BJ (cell line): ENCODE measurements at regions of chr22 and their contacts with region 1.

Region 1: GRCh38 chr22:32796865-32797573 is 4.5 kb upstream of the TIMP3 start:
- DNase-seq: no peak
- H3K4me3 ChIP-seq: no peak overlapping the region
- H3K27me3 ChIP-seq: no peaks in the 10 kb centered on the region
- CTCF ChIP-seq: peak; percentile 93

Region 2: DNA sequence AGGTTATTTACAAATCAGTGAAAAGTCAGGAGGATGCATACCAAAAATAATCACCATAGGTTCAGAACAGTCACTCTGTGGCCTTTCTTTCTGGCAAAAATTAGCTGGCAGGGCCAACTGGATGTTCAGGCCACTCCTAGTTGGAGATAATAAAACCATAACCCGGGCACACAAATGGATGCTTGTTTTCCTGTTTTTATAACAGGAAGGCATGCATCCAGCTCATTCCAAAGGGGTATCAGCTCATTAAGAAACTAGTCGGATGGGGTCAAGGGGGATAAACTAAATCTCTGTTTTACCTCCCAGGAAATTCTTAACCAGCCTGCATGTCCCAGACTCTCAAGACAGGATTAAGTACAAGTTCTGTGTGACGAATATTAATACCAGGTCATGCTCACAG is 241.4 kb before region 1 on chr22:
- CTCF ChIA-PET with region 1: interaction called, 11 read pairs
- POLR2A ChIA-PET with region 1: no interaction called
- DNase-seq: no peak
- H3K4me3 ChIP-seq: no peak overlapping the region
- H3K27me3 ChIP-seq: no peaks in the 10 kb centered on the region
- CTCF ChIP-seq: no peak

Region 3: DNA sequence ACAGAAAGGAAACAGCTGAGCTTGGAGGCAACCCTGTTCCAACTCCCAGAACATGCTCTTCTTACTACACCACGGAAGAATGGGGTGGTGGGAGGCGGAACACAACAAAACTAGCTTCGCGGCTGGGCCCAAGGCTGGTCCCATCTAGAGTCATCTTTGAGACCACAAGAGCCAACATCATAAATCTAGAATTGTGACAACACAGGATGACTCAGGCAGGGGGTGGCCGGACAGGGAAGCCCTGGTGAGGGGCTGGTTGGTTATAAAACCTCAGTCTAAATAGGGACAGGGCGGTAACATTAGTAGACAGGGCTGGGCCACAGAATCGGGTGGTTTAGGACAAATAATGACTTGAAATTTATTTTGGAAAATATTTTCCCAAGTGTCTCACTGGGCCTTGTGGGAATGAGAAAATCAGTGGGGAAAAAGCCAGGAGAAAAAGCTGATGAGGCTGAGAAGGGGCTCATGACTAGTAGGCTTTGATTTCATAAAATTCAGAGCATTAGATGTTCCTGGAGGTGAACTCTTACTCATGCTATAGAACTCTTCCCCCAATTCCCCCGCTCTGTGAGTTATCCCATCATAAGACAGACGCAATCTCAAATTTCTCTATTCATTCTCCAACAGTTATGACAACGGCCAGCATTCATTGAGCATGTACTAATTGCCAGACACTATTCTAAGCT is 147.4 kb before region 1 on chr22:
- CTCF ChIA-PET with region 1: interaction called, 13 read pairs
- POLR2A ChIA-PET with region 1: no interaction called
- DNase-seq: peak; percentile 56
- H3K4me3 ChIP-seq: no peak overlapping the region
- H3K27me3 ChIP-seq: no peaks in the 10 kb centered on the region
- CTCF ChIP-seq: no peak

Region 4: GRCh38 chr22:32674925-32675825 is 121.8 kb before region 1 on chr22:
- CTCF ChIA-PET with region 1: interaction called, 15 read pairs
- POLR2A ChIA-PET with region 1: no interaction called
- DNase-seq: no peak
- H3K4me3 ChIP-seq: no peak overlapping the region
- H3K27me3 ChIP-seq: no peaks in the 10 kb centered on the region; the same call in none of the 2 replicates
- CTCF ChIP-seq: peak; percentile 31

Region 5: GRCh38 chr22:32708830-32709229 is 88.2 kb before region 1 on chr22:
- CTCF ChIA-PET with region 1: interaction called, 14 read pairs
- POLR2A ChIA-PET with region 1: no interaction called
- DNase-seq: peak; percentile 70
- H3K4me3 ChIP-seq: no peak overlapping the region
- H3K27me3 ChIP-seq: no peaks in the 10 kb centered on the region
- CTCF ChIP-seq: no peak

Region 6: DNA sequence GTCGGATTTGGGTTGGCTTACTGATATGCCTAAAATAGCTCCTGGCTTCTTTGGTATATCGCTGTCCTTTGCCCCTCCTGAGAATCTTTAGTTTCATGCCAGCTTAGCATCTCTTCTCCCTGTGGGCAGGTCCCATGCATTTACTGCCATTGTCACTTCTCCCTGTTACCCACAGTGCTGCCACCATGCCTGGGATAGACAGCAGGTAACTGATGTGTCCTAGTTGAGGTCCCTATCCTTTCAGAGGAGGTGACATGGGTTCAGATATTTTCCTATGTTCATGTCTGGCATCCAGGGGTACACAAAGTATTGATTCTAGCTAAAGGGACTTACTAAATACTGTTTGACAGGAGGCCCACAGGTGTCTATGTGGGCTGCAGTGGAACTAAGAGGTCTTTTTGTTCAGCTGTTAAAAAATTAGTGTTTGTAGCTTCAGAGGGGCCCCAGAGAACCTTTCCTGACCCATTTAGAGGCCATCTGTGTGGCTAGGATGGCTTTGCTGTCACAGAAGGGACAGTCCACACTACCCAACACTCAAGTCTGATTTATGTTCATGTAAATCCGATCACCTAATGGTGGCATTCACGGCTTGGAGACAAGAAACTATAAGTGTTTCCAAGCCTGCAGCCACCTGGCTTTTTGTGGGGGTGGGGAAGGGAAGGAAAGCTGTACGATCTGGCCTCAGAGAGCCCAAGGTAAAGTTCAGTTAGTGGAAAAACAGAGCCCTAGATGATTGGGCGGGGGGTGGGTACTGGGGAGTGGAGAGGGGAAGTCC is 13.0 kb after region 1 on chr22:
- CTCF ChIA-PET with region 1: interaction called, 12 read pairs
- POLR2A ChIA-PET with region 1: no interaction called
- DNase-seq: no peak
- H3K4me3 ChIP-seq: no peak overlapping the region
- H3K27me3 ChIP-seq: no peaks in the 10 kb centered on the region
- CTCF ChIP-seq: no peak